Activated naive CD4-positive, alpha-beta T cell treated with anti-CD3 and anti-CD28 coated beads, Interleukin-2, amount 10 ng/mL, durations not matched to agents 7 days and 5 days (primary cell): ENCODE measurements at regions of chr15 and their contacts with region 1.

Region 1: DNA sequence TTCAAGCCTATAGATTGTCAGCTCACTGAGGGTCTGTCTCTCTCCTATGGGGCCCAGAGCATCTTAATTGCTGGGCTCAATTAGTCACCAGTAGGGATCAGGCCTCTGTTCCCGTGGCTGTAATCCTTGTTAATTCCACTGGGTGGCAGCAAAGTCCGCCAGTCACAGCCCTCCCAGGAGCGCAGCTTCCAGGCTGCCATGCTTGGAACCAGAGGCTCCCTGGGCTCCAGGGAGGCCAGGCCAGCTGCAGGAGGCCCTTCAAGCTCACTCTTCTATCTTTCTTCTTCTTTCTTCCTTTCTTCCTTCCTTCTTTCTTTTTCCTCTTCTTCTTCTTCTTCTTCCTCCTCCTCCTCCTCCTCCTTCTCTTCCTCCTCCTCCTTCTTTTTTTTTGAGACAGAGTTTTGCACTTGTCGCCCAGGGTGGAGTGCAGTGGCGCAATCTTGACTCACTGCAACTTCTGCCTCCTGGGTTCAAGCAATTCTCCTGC is 14.4 kb downstream of the RNU5B-1 start:
- DNase-seq: peak; percentile 84
- H3K4me3 Mint-ChIP-seq: no peak overlapping the region
- H3K27ac Mint-ChIP-seq: no peak overlapping the region
- H3K4me1 Mint-ChIP-seq: no peaks in the 10 kb centered on the region
- H3K27me3 Mint-ChIP-seq: peaks cover 34% of the 10 kb centered on the region

Region 2: DNA sequence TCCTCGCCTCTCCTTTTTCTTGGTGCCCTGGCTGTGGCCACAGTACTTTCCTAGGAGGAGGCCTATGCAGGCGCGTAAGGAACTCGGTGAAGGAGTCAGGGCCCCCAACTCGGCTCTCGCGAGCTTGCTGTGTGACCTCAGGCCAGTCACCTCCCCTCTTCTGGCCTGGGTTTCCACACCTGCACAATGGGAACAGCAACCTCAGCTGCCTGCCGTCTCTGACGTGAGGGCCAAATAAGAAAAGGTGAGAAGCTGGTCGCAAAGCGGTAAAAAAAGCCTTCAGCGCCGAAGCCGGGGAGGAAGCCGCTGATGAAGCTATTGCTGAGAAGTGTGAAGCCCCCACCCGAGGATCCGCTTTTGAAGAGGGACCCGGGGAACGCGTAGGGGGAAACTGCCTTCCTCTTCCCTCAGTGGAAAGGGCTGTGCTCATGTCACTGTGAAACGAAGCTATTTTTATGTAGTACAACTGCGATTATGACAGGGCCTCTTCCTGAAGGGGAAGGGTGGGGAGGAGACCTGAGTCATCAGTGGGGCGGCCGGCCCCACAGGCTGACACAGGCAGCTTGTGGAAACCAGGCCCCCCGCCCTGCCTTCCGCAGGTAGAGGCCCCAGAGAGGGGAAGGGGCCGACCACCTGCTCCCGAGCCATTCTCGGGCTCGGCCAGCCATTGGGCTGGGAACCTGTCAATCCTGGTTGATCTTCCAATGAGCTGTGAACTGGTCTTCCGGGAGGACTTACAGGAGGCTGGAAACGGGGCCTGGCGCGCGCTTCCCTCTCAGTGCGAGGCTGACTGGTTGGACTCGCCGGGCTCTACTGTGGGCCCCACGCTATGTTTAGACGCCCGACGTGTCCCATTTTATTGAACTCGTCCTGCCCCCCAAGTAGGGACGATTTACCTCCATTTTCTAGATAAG is 425.2 kb before region 1 on chr15:
- CTCF ChIA-PET with region 1: no interaction called
- DNase-seq: peak; percentile 99
- H3K4me3 Mint-ChIP-seq: peak overlapping the region; percentile 85
- H3K27ac Mint-ChIP-seq: peak overlapping the region; percentile 100
- H3K4me1 Mint-ChIP-seq: peaks cover 75% of the 10 kb centered on the region
- H3K27me3 Mint-ChIP-seq: no peaks in the 10 kb centered on the region

Region 3: GRCh38 chr15:65195548-65195923 is 123.4 kb before region 1 on chr15:
- CTCF ChIA-PET with region 1: no interaction called
- DNase-seq: no peak
- H3K4me3 Mint-ChIP-seq: no peak overlapping the region
- H3K27ac Mint-ChIP-seq: no peak overlapping the region
- H3K4me1 Mint-ChIP-seq: no peaks in the 10 kb centered on the region
- H3K27me3 Mint-ChIP-seq: peaks cover 6% of the 10 kb centered on the region

Region 4: DNA sequence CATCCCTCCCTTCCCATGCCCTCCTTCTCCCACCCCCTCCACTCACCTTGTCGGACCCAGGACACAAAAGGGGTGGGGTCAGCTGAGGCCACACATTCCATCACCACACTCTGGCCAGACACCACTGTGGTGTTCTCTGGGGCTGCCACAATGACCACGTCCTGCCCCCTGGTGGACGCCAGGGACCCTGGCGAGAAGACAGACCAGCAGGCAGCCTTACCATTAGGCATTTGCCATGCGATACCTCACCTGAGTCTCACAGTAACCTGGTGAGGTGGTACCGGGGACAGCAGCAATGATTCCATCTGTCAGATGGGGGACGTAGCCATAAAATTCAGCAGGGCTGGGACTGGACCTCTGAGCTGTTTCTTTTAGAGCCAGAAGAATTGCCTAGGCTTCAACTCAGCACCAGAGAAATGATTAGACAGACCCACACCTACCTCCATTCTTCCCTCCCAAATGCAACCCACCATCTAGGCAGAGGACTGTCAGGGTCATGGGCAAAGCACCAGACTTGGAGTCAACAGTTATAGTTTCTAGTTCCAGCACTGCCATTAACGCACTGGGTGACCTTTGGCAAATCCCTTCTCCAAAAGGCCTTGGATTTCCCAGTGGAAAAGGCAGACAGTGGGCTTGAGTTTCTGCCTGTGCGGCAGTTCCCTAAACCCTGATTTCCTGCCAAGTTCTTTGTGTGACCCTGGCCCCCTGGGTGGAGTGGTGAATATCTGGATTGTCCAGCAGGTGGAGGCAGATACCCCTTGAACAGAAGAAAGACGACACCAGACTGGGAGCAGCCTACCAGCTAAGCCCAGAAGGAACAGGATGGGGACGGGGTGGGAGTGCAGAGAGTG is 82.1 kb after region 1 on chr15:
- CTCF ChIA-PET with region 1: interaction called, 40 read pairs
- DNase-seq: peak; percentile 65
- H3K4me3 Mint-ChIP-seq: no peak overlapping the region
- H3K27ac Mint-ChIP-seq: no peak overlapping the region
- H3K4me1 Mint-ChIP-seq: peaks cover 6% of the 10 kb centered on the region
- H3K27me3 Mint-ChIP-seq: peaks cover 82% of the 10 kb centered on the region